Calu3 (cell line): ENCODE measurements at regions of chr5 and their contacts with region 1.

Region 1: DNA sequence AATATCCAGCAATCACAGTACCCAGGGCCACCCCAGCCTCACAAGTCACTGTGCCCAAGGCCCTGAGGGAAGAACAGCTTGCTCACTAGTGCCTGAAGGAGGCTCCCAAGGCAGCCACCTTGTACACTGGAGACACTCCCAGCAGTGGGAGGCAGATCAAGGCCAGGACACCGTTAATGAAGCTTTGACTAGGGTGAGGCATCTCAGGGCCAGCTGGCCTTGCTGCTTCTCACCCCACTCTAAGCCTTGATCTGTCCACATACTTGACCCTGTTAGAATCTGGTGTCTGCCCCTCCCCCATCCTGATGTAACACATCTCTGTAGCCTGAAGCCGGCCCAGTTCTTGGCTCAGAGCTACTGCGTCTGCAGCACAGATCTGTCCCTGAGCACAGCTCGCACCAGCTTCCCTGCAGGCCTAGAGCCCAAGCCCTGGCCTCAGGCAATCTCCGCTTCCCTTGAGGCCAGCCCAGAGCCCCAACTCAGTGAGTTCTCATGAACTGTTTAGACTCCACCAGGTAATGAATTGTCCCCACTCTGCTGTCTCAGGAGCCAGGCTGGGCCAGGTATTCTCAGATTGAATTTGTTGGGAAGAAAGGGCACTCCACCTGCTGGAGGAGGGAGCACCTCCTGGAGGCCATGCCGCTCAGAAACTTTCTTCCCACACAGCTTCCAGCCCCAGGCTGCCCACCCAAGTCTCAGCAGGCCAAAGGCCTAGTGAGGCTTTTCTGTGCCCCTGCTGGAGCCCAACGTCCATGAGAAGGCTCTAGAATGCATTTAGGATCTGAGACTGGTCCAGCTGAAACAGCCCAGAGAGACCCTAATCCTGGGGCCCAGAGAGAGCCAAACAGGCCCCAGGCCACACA is 13.5 kb upstream of the JADE2 start:
- DNase-seq: peak; percentile 64
- H3K4me3 Mint-ChIP-seq: peak overlapping the region; percentile 64
- H3K27ac Mint-ChIP-seq: peak overlapping the region; percentile 87
- H3K4me1 Mint-ChIP-seq: peaks cover 60% of the 10 kb centered on the region
- H3K27me3 Mint-ChIP-seq: no peaks in the 10 kb centered on the region
- CTCF ChIP-seq: peak; percentile 51

Region 2: DNA sequence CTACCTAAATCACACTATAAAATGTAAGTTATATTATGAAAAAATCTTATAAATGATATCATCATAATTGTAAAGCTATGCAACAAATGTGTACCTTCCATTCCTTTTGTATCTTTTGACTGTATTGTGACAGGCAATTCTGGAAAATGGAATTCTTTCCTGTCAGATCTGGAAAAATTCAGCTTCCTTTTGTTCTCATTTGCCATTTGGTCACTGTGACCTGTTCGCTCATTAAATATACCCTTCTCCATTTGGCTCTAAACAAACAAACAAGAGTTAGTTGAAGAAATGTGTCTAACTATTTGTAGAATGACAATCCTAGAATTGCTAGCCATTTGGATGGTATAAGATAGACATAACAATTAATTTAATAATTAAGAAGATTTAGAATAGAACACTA is 207.7 kb before region 1 on chr5:
- CTCF ChIA-PET with region 1: no interaction called
- intact Hi-C with region 1: loop called (anchors 5 kb)
- DNase-seq: no peak
- H3K4me3 Mint-ChIP-seq: no peak overlapping the region
- H3K27ac Mint-ChIP-seq: no peak overlapping the region
- H3K4me1 Mint-ChIP-seq: peaks cover 6% of the 10 kb centered on the region
- H3K27me3 Mint-ChIP-seq: no peaks in the 10 kb centered on the region
- CTCF ChIP-seq: no peak

Region 3: DNA sequence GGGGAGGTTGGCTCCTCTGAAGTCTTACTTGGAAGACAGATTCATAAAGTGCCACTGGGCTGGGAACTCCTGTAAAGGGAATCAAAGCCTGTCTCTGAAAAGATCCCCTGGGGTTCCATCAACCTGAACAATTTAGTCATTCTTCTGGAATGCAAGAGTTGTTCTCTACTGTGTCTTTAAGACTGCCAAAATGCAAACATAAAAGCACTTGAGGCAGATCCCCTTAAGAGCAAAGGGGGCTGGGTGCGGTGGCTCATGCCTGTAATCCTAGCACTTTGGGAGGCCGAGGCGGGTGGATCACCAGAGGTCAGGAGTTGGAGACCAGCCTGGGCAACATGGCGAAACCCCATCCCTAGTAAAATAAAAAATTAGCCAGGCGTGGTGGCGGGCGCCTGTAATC is 117.1 kb before region 1 on chr5:
- CTCF ChIA-PET with region 1: no interaction called
- intact Hi-C with region 1: no loop called
- DNase-seq: no peak
- H3K4me3 Mint-ChIP-seq: no peak overlapping the region
- H3K27ac Mint-ChIP-seq: no peak overlapping the region
- H3K4me1 Mint-ChIP-seq: no peaks in the 10 kb centered on the region
- H3K27me3 Mint-ChIP-seq: no peaks in the 10 kb centered on the region
- CTCF ChIP-seq: no peak

Region 4: GRCh38 chr5:134411546-134412266 is 100.3 kb before region 1 on chr5 and contains the start of gene CDKN2AIPNL:
- CTCF ChIA-PET with region 1: interaction called, 16 read pairs
- intact Hi-C with region 1: loop called (anchors 2 kb)
- DNase-seq: peak; percentile 98
- H3K4me3 Mint-ChIP-seq: peak within 1 kb of the TSS; percentile 99
- H3K27ac Mint-ChIP-seq: peak within 1 kb of the TSS; percentile 31
- H3K4me1 Mint-ChIP-seq: peaks cover 46% of the 10 kb centered on the region
- H3K27me3 Mint-ChIP-seq: no peaks in the 10 kb centered on the region
- CTCF ChIP-seq: peak; percentile 71
- total RNA-seq, gene CDKN2AIPNL: 43.7 and 51.6 TPM in 2 replicates

Region 5: GRCh38 chr5:134436523-134437339 is 75.3 kb before region 1 on chr5:
- CTCF ChIA-PET with region 1: interaction called, 13 read pairs
- intact Hi-C with region 1: no loop called
- DNase-seq: peak; percentile 91
- H3K4me3 Mint-ChIP-seq: peak overlapping the region; percentile 29
- H3K27ac Mint-ChIP-seq: peak overlapping the region; percentile 80
- H3K4me1 Mint-ChIP-seq: peaks cover 62% of the 10 kb centered on the region
- H3K27me3 Mint-ChIP-seq: no peaks in the 10 kb centered on the region
- CTCF ChIP-seq: no peak

Region 6: GRCh38 chr5:134465816-134466240 is 46.2 kb before region 1 on chr5:
- CTCF ChIA-PET with region 1: interaction called, 16 read pairs
- intact Hi-C with region 1: loop called (anchors 2 kb)
- DNase-seq: peak; percentile 96
- H3K4me3 Mint-ChIP-seq: peak overlapping the region; percentile 61
- H3K27ac Mint-ChIP-seq: peak overlapping the region; percentile 49
- H3K4me1 Mint-ChIP-seq: peaks cover 11% of the 10 kb centered on the region
- H3K27me3 Mint-ChIP-seq: no peaks in the 10 kb centered on the region
- CTCF ChIP-seq: no peak